Dendritic cell treated with granulocyte-macrophage colony-stimulating factor and Interleukin-4, amounts not matched to agents 40 ng/mL and 50 ng/mL, for 4 days (primary cell): ENCODE measurements at regions of chr10 and their contacts with region 1.

Region 1: DNA sequence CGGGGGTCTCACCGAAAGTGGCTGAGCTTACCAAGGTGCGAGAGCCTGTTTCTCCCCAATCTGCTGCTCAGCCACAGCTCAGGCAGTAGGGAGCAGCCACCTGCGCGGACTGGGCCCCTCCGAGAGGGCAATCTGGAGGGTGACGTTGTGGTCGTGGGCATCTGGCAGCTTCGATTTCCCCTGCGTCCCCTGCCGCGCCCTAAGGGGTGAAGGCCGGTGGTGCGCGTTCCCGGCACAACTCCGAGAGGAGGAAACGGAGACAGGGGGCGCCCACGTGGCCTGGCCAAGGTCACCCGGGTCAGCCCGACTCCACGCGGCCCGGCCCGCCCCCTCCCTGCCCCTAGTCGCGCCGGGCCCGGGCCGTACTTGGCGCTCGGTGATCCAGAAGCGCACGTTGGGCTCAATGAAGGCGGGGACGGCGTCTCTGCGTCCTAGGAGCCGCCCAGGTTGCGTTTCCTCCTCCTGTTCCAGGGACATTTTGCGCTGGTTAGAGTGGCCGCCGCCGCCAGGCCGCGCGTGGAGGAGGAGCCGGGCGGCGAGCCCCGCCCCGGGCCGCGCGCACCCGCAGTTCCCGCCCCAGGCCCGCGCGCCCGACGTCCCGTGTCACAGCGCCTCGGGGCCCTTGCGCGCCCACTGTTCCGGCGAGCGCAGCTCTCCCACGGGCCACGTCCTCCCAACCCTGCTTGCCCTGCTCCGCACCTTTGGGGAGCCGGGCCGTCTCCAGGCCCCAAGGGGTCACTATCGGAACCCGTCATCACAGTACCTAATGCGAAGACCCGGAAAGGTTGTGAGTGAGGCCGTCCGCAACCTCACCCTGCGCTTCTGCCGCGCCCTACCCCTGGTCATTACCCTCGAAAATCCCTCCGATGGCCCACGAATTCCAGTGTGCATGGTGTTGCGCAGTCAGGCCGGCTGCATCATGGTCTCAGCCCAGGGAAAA is at the start of gene SFXN4:
- H3K4me3 Mint-ChIP-seq: peak within 1 kb of the TSS; percentile 89
- H3K27ac Mint-ChIP-seq: peak within 1 kb of the TSS; percentile 98
- H3K4me1 Mint-ChIP-seq: peaks cover 41% of the 10 kb centered on the region
- H3K27me3 Mint-ChIP-seq: no peaks in the 10 kb centered on the region

Region 2: GRCh38 chr10:119103903-119104652 is 61.4 kb before region 1 on chr10 and contains the start of gene DENND10:
- intact Hi-C with region 1: loop called (anchors 2 kb)
- H3K4me3 Mint-ChIP-seq: peak within 1 kb of the TSS; percentile 74
- H3K27ac Mint-ChIP-seq: peak within 1 kb of the TSS; percentile 59
- H3K4me1 Mint-ChIP-seq: peaks cover 33% of the 10 kb centered on the region
- H3K27me3 Mint-ChIP-seq: no peaks in the 10 kb centered on the region

Region 3: GRCh38 chr10:119178372-119179119 is 13.1 kb after region 1 on chr10 and contains the start of gene PRDX3:
- intact Hi-C with region 1: loop called (anchors 1 kb)
- H3K4me3 Mint-ChIP-seq: peak within 1 kb of the TSS; percentile 98
- H3K27ac Mint-ChIP-seq: peak within 1 kb of the TSS; percentile 94
- H3K4me1 Mint-ChIP-seq: peaks cover 35% of the 10 kb centered on the region
- H3K27me3 Mint-ChIP-seq: no peaks in the 10 kb centered on the region